ENCODE measurements at regions of chr1 and their contacts with region 1.

Region 1: GRCh38 chr1:19044975-19045831 is 88.7 kb upstream of the IFFO2 start:
- DNase-seq: peak in 9 of 10 donors; percentile 60 to 87 (median 82)
- H3K4me3 ChIP-seq: peak overlapping the region in 10 of 59 donors; percentile 3 to 45 (median 20)
- H3K27ac ChIP-seq: peak overlapping the region in 1 of 59 donors; percentile 33
- H3K27me3 ChIP-seq: peaks cover 0 to 24% (median 0%) of the 10 kb centered on the region in 45 donors
- CTCF ChIP-seq: peak in 10 of 56 donors; percentile 6 to 32 (median 18)

Region 2: DNA sequence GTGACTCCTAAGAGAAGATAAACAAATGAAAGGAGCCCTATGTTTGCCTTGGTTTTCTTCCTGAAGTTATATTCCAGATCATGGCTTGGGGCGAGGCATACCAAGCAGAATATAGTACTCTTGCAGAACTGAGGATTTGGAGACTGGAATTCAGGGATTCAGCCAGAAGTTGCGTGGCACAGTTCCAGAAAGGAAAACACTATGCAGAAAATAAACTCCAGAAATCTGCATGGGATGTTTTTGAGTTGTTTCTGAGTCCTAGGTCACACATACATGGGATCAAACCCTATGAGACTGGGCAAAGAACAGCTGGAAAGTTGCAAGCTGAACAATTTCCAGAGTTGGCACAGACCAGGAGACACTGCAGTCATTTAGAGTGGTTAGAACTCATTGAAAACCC is 45.8 kb before region 1 on chr1:
- intact Hi-C with region 1: loop called in 1 of 2 experiments (anchors 5 kb)
- DNase-seq: no peak
- H3K4me3 ChIP-seq: no peak overlapping the region
- H3K27ac ChIP-seq: no peak overlapping the region
- H3K27me3 ChIP-seq: no peaks in the 10 kb centered on the region
- CTCF ChIP-seq: no peak

Measured in dorsolateral prefrontal cortex (tissue), 120 donors.